CD4-positive, alpha-beta T cell (primary cell): ENCODE measurements at regions of chr2 and their contacts with region 1.

Region 1: GRCh38 chr2:20313659-20314058 is 37.0 kb downstream of the PUM2 start:
- DNase-seq: no peak
- ATAC-seq: no peak
- H3K4me3 ChIP-seq: no peak overlapping the region
- H3K4me3 Mint-ChIP-seq: no peak overlapping the region
- H3K27ac ChIP-seq: no peak overlapping the region
- H3K27ac Mint-ChIP-seq: peak overlapping the region; percentile 35
- H3K4me1 ChIP-seq: peaks cover 12% of the 10 kb centered on the region
- H3K4me1 Mint-ChIP-seq: peaks cover 45% of the 10 kb centered on the region
- H3K27me3 ChIP-seq: no peaks in the 10 kb centered on the region
- H3K27me3 Mint-ChIP-seq: no peaks in the 10 kb centered on the region
- CTCF ChIP-seq: no peak

Region 2: GRCh38 chr2:20282916-20283592 is 30.6 kb before region 1 on chr2:
- CTCF ChIA-PET with region 1: interaction called, 3 read pairs
- POLR2A ChIA-PET with region 1: no interaction called
- intact Hi-C with region 1: loop called in 1 of 2 experiments (anchors 5 kb)
- DNase-seq: no peak
- ATAC-seq: no peak
- H3K4me3 ChIP-seq: no peak overlapping the region
- H3K4me3 Mint-ChIP-seq: no peak overlapping the region
- H3K27ac ChIP-seq: no peak overlapping the region
- H3K27ac Mint-ChIP-seq: no peak overlapping the region
- H3K4me1 ChIP-seq: no peaks in the 10 kb centered on the region
- H3K4me1 Mint-ChIP-seq: peaks cover 40% of the 10 kb centered on the region
- H3K27me3 ChIP-seq: no peaks in the 10 kb centered on the region
- H3K27me3 Mint-ChIP-seq: no peaks in the 10 kb centered on the region
- CTCF ChIP-seq: no peak